Panc1 (cell line): ENCODE measurements at regions of chr2 and their contacts with region 1.

Region 1: GRCh38 chr2:114949228-114949804 is 506.9 kb downstream of the DPP10 start:
- DNase-seq: no peak
- ATAC-seq: no peak
- H3K4me3 ChIP-seq: no peak overlapping the region
- H3K27ac ChIP-seq: no peak overlapping the region
- H3K4me1 ChIP-seq: no peaks in the 10 kb centered on the region
- H3K27me3 ChIP-seq: no peaks in the 10 kb centered on the region
- CTCF ChIP-seq: no peak

Region 2: GRCh38 chr2:114534116-114535084 is 414.9 kb before region 1 on chr2:
- CTCF ChIA-PET with region 1: no interaction called
- POLR2A ChIA-PET with region 1: no interaction called
- in situ Hi-C with region 1: no loop called
- intact Hi-C with region 1: no loop called
- DNase-seq: no peak
- ATAC-seq: no peak
- H3K4me3 ChIP-seq: no peak overlapping the region
- H3K27ac ChIP-seq: no peak overlapping the region
- H3K4me1 ChIP-seq: no peaks in the 10 kb centered on the region
- H3K27me3 ChIP-seq: no peaks in the 10 kb centered on the region
- CTCF ChIP-seq: no peak

Region 3: DNA sequence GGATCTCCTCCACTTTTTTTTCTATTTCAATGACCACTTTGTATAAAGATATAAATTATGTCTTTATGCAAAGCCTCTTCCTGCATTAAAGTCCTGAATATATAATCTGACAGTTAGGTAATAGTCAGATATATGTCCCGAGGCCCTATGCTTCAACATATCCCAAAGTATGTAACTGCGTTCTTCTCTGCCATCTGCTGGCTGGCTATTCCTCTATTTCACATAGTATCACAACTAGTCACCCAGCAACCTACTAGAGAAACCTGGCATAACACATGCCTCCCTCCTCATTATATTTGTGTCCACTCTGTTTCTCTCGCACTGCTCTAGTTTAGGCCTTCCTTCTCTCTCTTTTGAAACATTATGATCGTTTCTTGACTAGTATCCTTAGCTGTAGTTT is 133.9 kb after region 1 on chr2:
- CTCF ChIA-PET with region 1: no interaction called
- POLR2A ChIA-PET with region 1: no interaction called
- in situ Hi-C with region 1: no loop called
- intact Hi-C with region 1: loop called (anchors 10 kb)
- DNase-seq: no peak
- ATAC-seq: no peak
- H3K4me3 ChIP-seq: no peak overlapping the region
- H3K27ac ChIP-seq: no peak overlapping the region
- H3K4me1 ChIP-seq: no peaks in the 10 kb centered on the region
- H3K27me3 ChIP-seq: no peaks in the 10 kb centered on the region
- CTCF ChIP-seq: peak; percentile 13; the same call in 1 of the 2 replicates